ENCODE measurements at regions of chr9 and their contacts with region 1.

Region 1: GRCh38 chr9:34376596-34377403 is at the start of gene MYORG:
- DNase-seq: peak; percentile 99
- ATAC-seq: peak; percentile 68
- total RNA-seq, gene MYORG: 65.2 to 72.3 TPM

Region 2: DNA sequence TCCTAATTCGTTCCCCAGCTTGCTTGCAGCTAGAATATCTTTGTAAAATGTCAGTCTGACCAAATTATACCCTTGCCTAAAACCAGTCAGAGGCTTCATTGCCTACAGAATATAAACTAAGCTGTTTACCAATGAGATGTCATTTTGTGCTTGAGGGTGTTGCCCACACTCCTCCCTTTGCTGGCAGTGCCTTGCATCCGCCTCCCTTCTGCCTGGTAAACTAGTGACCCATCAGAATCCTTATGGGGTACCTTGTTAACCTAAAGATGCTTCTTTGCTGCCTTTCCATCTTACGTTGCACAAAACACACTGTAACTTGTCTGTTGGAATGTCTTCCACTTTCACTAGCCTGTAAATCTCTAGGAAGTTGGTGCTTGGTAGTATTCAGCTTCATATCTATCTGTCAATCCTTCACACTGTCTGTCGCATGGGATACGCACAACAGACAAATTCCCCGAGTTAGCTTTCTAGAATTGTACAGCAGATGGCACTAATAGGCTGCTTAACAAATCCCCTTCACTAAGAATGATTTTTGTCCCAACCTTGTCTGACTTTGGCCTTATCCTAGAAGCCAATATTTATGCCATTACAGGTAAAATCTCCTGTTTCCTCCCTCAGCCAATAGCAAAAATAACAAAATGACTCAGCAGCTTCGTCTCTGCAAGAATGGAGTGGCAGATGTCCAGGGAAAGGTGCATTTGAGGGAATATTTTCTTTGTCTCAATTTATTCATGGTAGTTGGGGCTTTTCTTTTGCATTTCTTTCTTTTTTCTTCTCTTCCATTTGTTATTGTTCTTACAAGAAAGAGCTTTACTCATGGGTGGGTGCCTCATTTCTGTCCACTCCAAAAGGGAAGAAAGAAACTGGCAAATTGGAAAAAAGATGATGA is 44.5 kb before region 1 on chr9:
- intact Hi-C with region 1: loop called (anchors 2 to 5 kb)
- DNase-seq: no peak
- ATAC-seq: no peak

Region 3: DNA sequence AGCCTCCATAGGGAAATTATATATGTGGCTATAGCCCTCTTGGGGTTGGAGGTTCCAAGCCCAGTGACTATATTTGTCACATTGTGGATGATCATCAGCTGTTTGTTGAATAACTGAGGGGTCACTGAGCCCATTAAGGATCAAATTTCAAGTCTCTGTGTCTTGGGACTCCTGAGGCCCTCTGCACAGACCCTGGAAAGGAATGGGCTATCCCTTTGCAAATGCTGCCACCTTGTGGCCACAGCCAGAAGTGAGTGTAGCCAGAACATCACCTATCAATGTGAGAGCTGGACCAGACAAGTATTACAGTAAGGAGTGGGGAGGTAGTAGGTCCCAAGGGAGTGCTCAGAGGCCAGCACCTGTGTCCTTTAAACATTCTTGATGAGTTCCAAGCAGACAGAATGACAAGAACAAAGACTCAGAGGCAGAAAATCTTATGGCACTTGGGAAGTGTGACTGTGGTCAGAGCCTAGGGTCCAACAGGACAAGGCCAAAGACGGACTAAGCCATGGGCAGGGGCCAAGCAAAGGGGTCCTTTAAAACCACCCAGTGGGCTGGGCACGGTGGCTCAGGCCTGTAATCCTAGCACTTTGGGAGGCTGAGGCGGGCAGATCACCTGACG is 226.9 kb after region 1 on chr9:
- intact Hi-C with region 1: no loop called
- DNase-seq: peak; percentile 61 to 87
- ATAC-seq: peak; percentile 75